IMR-90 (cell line): ENCODE measurements at regions of chr9 and their contacts with region 1.

Region 1: GRCh38 chr9:99130069-99130468 is 25.2 kb downstream of the TGFBR1 start:
- DNase-seq: no peak
- ATAC-seq: no peak
- H3K4me3 ChIP-seq: no peak overlapping the region
- H3K27ac ChIP-seq: no peak overlapping the region
- H3K4me1 ChIP-seq: peaks cover 18% of the 10 kb centered on the region
- H3K27me3 ChIP-seq: no peaks in the 10 kb centered on the region
- CTCF ChIP-seq: no peak
- POLR2A ChIP-seq: no peak
- RAD21 ChIP-seq: no peak

Region 2: DNA sequence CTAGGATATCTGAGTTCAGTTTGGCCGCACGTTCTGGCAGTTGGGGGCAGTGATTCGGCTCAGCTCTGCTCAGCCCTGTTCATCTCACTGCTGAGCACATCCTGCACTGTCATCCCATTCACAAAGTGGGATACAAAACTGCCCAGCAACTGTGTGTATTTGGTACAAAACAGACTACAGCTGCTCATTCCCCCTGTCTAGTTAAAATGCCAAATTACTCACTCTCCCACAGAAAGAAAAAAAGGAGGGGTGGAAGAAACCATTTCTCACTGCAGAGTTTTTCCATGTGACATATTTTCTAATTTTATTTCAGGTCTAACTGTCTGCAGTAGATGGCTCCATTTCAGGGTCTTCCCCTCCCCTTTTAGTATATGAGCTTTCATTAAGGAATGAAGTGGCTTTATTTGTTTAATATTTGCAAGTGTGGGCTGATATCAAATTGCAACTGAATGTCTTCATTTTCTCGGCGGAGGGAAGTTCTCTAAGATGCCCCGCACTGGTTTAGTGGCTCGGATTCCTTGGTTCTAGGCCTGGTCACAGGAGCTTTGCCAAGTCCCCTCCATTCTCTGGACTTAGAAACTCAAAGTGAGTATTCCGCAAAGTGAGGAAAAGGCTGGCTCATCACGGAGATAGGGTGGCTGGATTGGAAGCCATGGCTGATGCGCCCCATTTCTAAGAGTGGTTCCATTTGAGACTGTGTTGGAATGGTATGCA is 171.6 kb before region 1 on chr9:
- CTCF ChIA-PET with region 1: interaction called, 10 read pairs
- POLR2A ChIA-PET with region 1: no interaction called
- dilution Hi-C with region 1: no loop called
- in situ Hi-C with region 1: no loop called
- intact Hi-C with region 1: no loop called
- DNase-seq: peak; percentile 98
- ATAC-seq: peak; percentile 68
- H3K4me3 ChIP-seq: no peak overlapping the region
- H3K27ac ChIP-seq: peak overlapping the region; percentile 96
- H3K4me1 ChIP-seq: peaks cover 37% of the 10 kb centered on the region
- H3K27me3 ChIP-seq: no peaks in the 10 kb centered on the region
- CTCF ChIP-seq: no peak
- POLR2A ChIP-seq: no peak; the same call in 1 of the 2 replicates
- RAD21 ChIP-seq: no peak

Region 3: DNA sequence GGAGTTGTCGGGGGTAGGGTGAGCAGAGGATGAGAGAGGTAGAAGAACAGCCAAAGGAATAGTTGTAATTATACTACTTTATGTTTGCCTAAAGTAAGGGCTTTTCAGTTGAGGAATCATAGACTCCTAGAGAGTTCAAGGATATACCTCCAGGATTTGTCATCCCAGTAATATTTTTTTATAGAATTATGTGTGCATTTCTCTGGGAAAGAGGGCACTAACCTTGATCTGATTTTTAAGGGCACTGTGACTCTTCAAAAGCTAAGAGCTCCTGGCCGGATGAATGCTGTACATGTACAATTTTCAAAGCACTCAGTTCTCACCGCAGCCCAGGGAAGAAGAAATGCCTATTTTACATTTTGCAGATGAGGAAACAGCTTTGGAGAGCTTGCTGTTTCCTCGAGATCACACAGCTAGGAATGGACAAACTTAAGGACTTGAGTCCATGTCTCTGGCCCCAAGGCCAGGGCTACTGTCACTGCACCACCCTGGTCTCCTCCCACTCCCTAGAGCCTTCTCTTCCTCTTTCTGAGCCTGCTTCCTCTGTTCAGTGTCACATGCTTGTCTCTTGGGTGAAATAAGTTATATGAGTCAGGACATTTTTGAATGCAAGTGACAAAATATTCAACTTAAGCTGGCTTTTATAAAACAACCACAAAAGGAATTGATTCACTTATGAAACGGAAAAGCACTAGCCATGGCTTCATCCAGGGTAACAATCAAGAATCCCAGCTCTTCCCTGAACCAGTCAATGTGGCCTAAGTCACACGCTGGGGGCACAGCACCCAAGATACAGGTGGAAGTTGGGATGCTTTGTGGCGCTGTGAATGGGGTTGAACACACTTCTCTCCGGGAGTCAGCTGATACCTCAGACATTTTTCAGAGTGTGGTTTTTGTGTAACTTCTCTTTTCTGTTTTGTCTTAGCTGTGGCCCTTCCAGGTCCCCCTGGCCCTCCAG is 70.8 kb before region 1 on chr9:
- CTCF ChIA-PET with region 1: no interaction called
- POLR2A ChIA-PET with region 1: no interaction called
- dilution Hi-C with region 1: no loop called
- in situ Hi-C with region 1: no loop called
- intact Hi-C with region 1: loop called (anchors 2 kb)
- DNase-seq: no peak
- ATAC-seq: no peak
- H3K4me3 ChIP-seq: no peak overlapping the region
- H3K27ac ChIP-seq: no peak overlapping the region
- H3K4me1 ChIP-seq: peaks cover 11% of the 10 kb centered on the region; the same call in 1 of the 2 replicates
- H3K27me3 ChIP-seq: no peaks in the 10 kb centered on the region
- CTCF ChIP-seq: no peak
- POLR2A ChIP-seq: no peak
- RAD21 ChIP-seq: no peak

Region 4: GRCh38 chr9:99140685-99141314 is 10.7 kb after region 1 on chr9:
- CTCF ChIA-PET with region 1: interaction called, 4 read pairs
- POLR2A ChIA-PET with region 1: no interaction called
- dilution Hi-C with region 1: no loop called
- in situ Hi-C with region 1: no loop called
- intact Hi-C with region 1: loop called (anchors 1 kb)
- DNase-seq: peak; percentile 67
- ATAC-seq: peak; percentile 90
- H3K4me3 ChIP-seq: no peak overlapping the region
- H3K27ac ChIP-seq: no peak overlapping the region
- H3K4me1 ChIP-seq: no peaks in the 10 kb centered on the region
- H3K27me3 ChIP-seq: no peaks in the 10 kb centered on the region
- CTCF ChIP-seq: peak; percentile 86
- POLR2A ChIP-seq: no peak
- RAD21 ChIP-seq: peak; percentile 95

Region 5: GRCh38 chr9:99544526-99544925 is 414.5 kb after region 1 on chr9:
- CTCF ChIA-PET with region 1: no interaction called
- POLR2A ChIA-PET with region 1: no interaction called
- dilution Hi-C with region 1: no loop called
- in situ Hi-C with region 1: no loop called
- intact Hi-C with region 1: no loop called
- DNase-seq: no peak
- ATAC-seq: no peak
- H3K4me3 ChIP-seq: no peak overlapping the region
- H3K27ac ChIP-seq: no peak overlapping the region
- H3K4me1 ChIP-seq: no peaks in the 10 kb centered on the region
- H3K27me3 ChIP-seq: peaks cover 7% of the 10 kb centered on the region
- CTCF ChIP-seq: no peak
- POLR2A ChIP-seq: no peak
- RAD21 ChIP-seq: no peak